ENCODE measurements at regions of chr20 and their contacts with region 1.

Region 1: DNA sequence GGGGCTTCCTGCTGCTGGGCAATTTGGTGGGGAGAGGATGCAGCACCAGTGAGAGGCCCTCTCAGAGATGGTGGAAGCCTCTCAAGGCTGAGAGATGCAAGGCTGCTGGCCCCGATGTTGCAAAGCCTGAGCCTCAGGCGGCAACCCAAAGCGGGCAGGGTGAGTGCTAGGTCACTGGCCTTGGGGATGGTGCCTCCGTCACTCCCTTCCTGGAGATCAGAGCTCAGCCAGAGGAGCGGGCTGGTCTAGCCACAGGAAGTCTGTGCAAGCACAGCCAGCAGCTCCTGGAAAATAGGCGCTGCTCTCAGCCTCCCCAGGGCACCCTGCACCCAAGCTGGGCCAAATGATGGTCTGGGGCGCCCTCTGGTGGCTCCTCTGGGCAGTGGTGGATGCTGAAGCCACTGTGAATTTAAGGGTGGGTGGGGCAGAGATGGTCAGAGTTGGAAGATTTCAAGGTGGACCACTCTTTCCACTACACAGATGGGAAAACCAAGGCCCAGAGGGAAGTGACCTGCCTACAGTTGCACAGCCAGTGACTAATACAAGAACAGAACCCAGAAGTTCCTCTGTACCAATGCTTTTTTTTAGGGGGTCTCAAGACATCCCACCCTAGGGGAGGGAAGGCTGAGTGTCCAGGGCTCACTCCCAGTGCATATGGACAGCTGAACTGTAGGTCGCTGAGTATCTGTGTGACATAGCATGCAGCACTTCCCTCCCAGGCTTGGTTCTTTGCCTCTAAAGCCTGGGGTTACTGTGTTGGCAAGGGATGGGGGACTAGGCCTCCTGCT is 20.8 kb downstream of the C20orf203 start:
- DNase-seq: peak; percentile 90
- CTCF ChIP-seq: peak; percentile 93

Region 2: DNA sequence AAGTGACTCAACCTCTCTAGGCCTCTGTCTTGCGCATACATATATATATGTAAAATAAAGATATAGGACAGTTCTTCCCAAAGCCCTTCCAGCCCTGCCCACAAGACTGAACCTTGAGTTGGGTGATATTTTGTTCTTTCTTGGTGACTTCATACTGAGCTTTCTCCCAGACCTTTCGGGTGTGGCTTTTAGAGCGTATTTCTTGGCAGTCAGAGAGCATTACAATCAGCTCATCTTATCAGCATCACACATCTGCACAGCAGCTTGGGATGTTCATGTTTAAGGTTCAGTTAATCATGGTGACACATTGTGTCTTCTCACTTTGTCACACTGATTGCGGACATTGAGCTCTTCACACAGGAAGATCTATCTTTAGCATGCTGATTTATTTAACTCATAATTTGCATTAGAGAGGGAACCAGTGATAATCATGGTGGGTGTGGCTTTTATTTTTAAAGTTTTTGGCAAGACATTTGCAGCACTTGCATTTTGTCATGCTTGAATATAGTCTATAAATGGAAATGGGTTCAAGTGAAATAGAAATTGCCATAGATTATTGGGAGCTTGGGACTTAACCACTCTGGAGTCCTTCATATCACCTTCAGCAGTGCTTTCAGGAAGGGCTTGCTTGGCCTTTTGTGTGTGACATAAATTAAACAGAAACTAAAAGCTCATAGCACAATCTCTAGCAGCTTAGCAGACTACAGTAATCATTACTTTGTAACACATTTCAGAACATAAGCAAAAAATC is 367.1 kb before region 1 on chr20:
- in situ Hi-C with region 1: no loop called
- DNase-seq: peak; percentile 55
- CTCF ChIP-seq: no peak

Region 3: GRCh38 chr20:32509639-32510066 is 143.3 kb before region 1 on chr20:
- in situ Hi-C with region 1: no loop called
- DNase-seq: no peak
- CTCF ChIP-seq: no peak

Region 4: DNA sequence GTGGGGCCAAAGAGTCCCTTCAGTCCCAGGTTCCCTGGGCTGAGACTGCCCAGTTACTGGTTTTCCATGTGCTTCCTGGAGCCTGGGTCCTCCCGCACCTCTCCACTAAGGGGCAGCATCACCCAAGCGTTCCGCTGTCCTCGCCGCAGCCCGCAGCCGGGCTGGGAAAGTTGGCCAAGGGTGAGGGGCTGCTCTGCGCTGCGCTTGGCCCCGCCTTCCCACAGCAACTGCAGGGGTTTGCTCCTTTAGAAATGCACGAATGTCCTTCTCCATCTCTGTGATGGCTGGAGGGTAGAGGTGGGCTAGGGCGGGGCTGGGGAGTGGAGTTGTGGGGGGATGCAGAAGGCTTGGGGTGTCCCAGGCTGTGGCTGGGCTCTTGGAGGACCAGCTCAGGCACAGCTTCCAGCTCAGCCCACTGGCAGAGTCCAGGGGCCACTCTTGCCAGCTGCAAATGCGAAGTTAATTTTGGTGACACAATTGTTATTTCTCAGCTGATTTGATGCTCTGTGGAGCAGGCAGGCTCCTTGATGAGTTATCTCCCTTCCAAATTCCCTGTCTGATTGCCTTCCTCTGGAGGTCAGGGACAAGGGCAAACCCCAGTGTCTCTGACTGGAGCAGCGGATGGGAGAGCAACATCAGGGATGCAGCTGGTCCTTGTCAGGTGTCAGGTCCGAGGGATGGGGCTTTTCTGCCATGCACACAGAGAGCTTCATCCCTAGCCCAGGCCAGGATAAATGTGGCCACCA is 131.0 kb before region 1 on chr20:
- in situ Hi-C with region 1: loop called (anchors 5 kb)
- DNase-seq: peak; percentile 85
- CTCF ChIP-seq: peak; percentile 85